ENCODE measurements at regions of chr2 and their contacts with region 1.

Region 1: DNA sequence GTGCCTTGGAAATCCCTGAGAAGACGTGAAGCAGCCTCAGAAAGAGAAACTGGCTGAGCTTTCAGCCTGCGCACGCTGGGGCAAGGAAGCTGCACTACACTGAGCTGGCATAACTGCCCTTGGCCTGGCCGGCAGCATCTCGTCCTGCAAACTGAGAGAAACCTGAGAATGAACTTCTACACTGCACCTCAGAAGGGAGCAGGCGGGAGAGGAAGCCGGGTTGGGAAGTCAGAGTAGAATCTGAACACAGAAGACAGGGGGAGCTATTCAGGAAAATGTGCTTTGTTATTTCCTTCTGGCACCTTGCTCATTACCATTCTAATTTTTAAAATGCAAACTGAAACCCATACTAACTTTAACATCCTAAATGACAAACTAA is 70.9 kb downstream of the ZEB2 start:
- DNase-seq: peak in 1 of 2 experiments; percentile 51
- H3K4me3 ChIP-seq: no peak overlapping the region
- H3K27ac ChIP-seq: no peak overlapping the region
- H3K4me1 ChIP-seq: peaks cover 0 to 28% (median 24%) of the 10 kb centered on the region in 4 experiments; a peak in 6 of 7 replicates
- H3K27me3 ChIP-seq: peaks cover 0 to 7% (median 4%) of the 10 kb centered on the region in 4 experiments; a peak in 3 of 7 replicates
- CTCF ChIP-seq: peak; percentile 41 to 65 (median 53)
- EP300 ChIP-seq: no peak
- POLR2A ChIP-seq: no peak
- RAD21 ChIP-seq: peak; percentile 41 to 57

Region 2: GRCh38 chr2:144382849-144383248 is 66.2 kb before region 1 on chr2:
- CTCF ChIA-PET with region 1: no interaction called
- POLR2A ChIA-PET with region 1: no interaction called
- DNase-seq: no peak
- H3K4me3 ChIP-seq: no peak overlapping the region
- H3K27ac ChIP-seq: no peak overlapping the region
- H3K4me1 ChIP-seq: no peaks in the 10 kb centered on the region
- H3K27me3 ChIP-seq: no peaks in the 10 kb centered on the region
- CTCF ChIP-seq: no peak
- EP300 ChIP-seq: no peak
- POLR2A ChIP-seq: no peak
- RAD21 ChIP-seq: no peak

Region 3: GRCh38 chr2:144414324-144414845 is 34.6 kb before region 1 on chr2:
- CTCF ChIA-PET with region 1: interaction called, 13 read pairs
- POLR2A ChIA-PET with region 1: no interaction called
- DNase-seq: no peak
- H3K4me3 ChIP-seq: no peak overlapping the region
- H3K27ac ChIP-seq: no peak overlapping the region
- H3K4me1 ChIP-seq: peaks cover 0 to 3% (median 0%) of the 10 kb centered on the region in 4 experiments; a peak in 1 of 7 replicates
- H3K27me3 ChIP-seq: no peaks in the 10 kb centered on the region
- CTCF ChIP-seq: no peak
- EP300 ChIP-seq: no peak
- POLR2A ChIP-seq: no peak
- RAD21 ChIP-seq: no peak

Region 4: DNA sequence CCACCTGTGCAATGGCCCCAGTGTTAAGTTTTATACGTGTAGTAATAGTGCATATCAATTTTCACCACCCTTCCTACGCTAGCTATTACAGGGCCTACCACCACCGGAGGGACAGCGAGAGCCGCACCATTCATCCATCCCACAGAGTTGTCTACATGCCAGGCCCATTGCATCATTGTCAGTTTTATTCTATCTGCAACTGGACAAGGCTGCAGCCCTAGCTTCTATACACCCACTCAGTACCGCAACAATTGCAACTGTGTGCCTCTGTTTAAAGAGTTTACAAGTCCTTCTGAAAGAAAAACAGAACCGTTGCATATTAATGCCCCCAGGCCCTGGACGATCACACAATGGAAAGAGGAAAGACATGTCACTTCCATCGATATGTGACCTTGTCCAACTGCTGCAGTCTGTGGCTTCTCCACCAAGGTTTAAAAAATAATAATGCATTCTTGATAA is 12.3 kb after region 1 on chr2:
- CTCF ChIA-PET with region 1: interaction called, 34 read pairs
- POLR2A ChIA-PET with region 1: interaction called, 3 read pairs
- DNase-seq: no peak
- H3K4me3 ChIP-seq: no peak overlapping the region
- H3K27ac ChIP-seq: no peak overlapping the region
- H3K4me1 ChIP-seq: no peaks in the 10 kb centered on the region; a peak in 1 of 7 replicates
- H3K27me3 ChIP-seq: no peaks in the 10 kb centered on the region; a peak in 2 of 7 replicates
- CTCF ChIP-seq: no peak
- EP300 ChIP-seq: no peak
- POLR2A ChIP-seq: no peak
- RAD21 ChIP-seq: no peak

Region 5: GRCh38 chr2:144479138-144479537 is 30.1 kb after region 1 on chr2:
- CTCF ChIA-PET with region 1: interaction called, 51 read pairs
- POLR2A ChIA-PET with region 1: interaction called, 3 read pairs
- DNase-seq: peak in 1 of 2 experiments; percentile 53
- H3K4me3 ChIP-seq: no peak overlapping the region
- H3K27ac ChIP-seq: peak overlapping the region; percentile 16; the same call in 1 of the 2 replicates
- H3K4me1 ChIP-seq: peaks cover 0 to 18% (median 10%) of the 10 kb centered on the region in 4 experiments; a peak in 5 of 7 replicates
- H3K27me3 ChIP-seq: no peaks in the 10 kb centered on the region
- CTCF ChIP-seq: no peak
- EP300 ChIP-seq: no peak
- POLR2A ChIP-seq: no peak
- RAD21 ChIP-seq: no peak; a peak in 1 of 4 replicates

Region 6: DNA sequence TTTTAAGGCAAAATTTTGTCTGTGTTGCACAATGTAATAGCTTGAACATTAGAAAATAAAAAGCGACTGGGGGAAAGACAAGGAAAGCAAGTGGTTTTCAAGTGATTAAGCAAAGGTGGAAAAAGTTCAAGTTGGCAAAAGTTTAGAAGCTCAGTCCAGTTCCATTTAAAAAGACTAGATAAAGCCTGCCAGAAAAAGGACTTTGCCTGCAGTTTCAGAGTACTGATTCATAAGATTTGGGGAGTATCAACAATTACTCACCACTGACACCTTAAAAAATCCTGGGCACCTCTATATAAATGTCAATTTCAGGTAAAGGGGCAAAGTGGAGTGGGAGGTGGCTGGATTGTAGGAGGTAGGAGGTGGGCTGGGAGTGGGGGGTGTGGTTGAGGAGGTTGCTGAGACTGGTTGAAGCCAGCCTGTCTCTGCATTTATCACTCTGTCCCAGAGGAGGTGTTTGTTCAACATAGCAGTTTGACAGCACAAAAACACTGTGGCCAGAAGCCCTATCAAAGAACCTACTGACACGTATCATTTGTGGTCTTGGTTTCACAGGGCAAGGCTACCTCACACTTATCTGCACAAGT is 56.3 kb after region 1 on chr2:
- CTCF ChIA-PET with region 1: interaction called, 18 read pairs
- POLR2A ChIA-PET with region 1: interaction called, 4 read pairs
- DNase-seq: no peak
- H3K4me3 ChIP-seq: no peak overlapping the region
- H3K27ac ChIP-seq: no peak overlapping the region
- H3K4me1 ChIP-seq: peaks cover 5 to 26% (median 20%) of the 10 kb centered on the region in 4 experiments
- H3K27me3 ChIP-seq: peaks cover 2 to 12% (median 9%) of the 10 kb centered on the region in 4 experiments; a peak in 5 of 7 replicates
- CTCF ChIP-seq: no peak
- EP300 ChIP-seq: no peak
- POLR2A ChIP-seq: no peak
- RAD21 ChIP-seq: no peak

Region 7: GRCh38 chr2:144615866-144616565 is 167.0 kb after region 1 on chr2:
- CTCF ChIA-PET with region 1: no interaction called
- POLR2A ChIA-PET with region 1: no interaction called
- DNase-seq: no peak
- H3K4me3 ChIP-seq: no peak overlapping the region
- H3K27ac ChIP-seq: no peak overlapping the region
- H3K4me1 ChIP-seq: peaks cover 0 to 3% (median 0%) of the 10 kb centered on the region in 4 experiments; a peak in 1 of 7 replicates
- H3K27me3 ChIP-seq: no peaks in the 10 kb centered on the region
- CTCF ChIP-seq: no peak
- EP300 ChIP-seq: no peak
- POLR2A ChIP-seq: no peak
- RAD21 ChIP-seq: no peak

Measured in H1 (cell line).